Activated CD4-positive, alpha-beta T cell treated with anti-CD3 and anti-CD28 coated beads, Interleukin-2, amount 10 ng/mL, durations not matched to agents 24 days and 14 days (primary cell): ENCODE measurements at regions of chr11 and their contacts with region 1.

Region 1: GRCh38 chr11:86592659-86593451 is 79.6 kb downstream of the ME3 start:
- DNase-seq: peak; percentile 94
- H3K4me3 Mint-ChIP-seq: peak overlapping the region; percentile 62
- H3K27ac Mint-ChIP-seq: peak overlapping the region; percentile 90
- H3K4me1 Mint-ChIP-seq: peaks cover 47% of the 10 kb centered on the region
- H3K27me3 Mint-ChIP-seq: no peaks in the 10 kb centered on the region

Region 2: GRCh38 chr11:86447763-86448480 is 144.9 kb before region 1 on chr11:
- intact Hi-C with region 1: loop called (anchors 2 kb)
- DNase-seq: peak; percentile 79
- H3K4me3 Mint-ChIP-seq: peak overlapping the region; percentile 48
- H3K27ac Mint-ChIP-seq: no peak overlapping the region
- H3K4me1 Mint-ChIP-seq: peaks cover 37% of the 10 kb centered on the region
- H3K27me3 Mint-ChIP-seq: no peaks in the 10 kb centered on the region

Region 3: GRCh38 chr11:86511086-86511551 is 81.7 kb before region 1 on chr11:
- intact Hi-C with region 1: loop called (anchors 1 kb)
- DNase-seq: no peak
- H3K4me3 Mint-ChIP-seq: no peak overlapping the region
- H3K27ac Mint-ChIP-seq: no peak overlapping the region
- H3K4me1 Mint-ChIP-seq: no peaks in the 10 kb centered on the region
- H3K27me3 Mint-ChIP-seq: peaks cover under 1% of the 10 kb centered on the region

Region 4: DNA sequence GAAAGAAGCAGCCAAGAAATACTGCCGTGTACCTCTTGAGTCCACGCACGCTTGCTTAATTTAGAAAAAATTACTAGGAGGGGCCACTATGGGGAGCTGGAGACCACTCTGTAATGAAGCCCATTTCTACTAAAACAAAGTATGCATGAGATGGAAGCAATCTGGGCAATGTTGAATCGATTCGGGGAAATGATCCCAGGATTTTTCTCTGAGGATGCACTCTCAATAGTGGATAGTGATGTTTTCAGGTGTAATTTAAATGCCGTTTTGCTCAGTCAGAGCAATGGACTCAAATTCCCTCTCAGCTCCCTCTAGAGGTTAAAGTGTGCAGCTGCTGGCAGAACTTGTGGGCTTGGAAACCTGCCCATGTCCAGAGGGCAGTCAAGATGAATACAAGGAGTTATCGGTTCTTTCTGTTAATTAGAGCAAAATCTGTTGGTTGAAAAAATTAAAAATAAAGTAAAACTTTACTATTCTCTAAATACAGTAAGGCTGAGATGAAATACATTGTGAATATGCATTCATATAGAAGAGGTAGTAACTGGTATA is 15.5 kb after region 1 on chr11:
- intact Hi-C with region 1: loop called (anchors 1 kb)
- DNase-seq: peak; percentile 82
- H3K4me3 Mint-ChIP-seq: no peak overlapping the region
- H3K27ac Mint-ChIP-seq: no peak overlapping the region
- H3K4me1 Mint-ChIP-seq: peaks cover 22% of the 10 kb centered on the region
- H3K27me3 Mint-ChIP-seq: peaks cover 3% of the 10 kb centered on the region